Activated B cell treated with CpG ODN at 0.5 μM for 24 hours (primary cell): ENCODE measurements at regions of chr10 and their contacts with region 1.

Region 1: DNA sequence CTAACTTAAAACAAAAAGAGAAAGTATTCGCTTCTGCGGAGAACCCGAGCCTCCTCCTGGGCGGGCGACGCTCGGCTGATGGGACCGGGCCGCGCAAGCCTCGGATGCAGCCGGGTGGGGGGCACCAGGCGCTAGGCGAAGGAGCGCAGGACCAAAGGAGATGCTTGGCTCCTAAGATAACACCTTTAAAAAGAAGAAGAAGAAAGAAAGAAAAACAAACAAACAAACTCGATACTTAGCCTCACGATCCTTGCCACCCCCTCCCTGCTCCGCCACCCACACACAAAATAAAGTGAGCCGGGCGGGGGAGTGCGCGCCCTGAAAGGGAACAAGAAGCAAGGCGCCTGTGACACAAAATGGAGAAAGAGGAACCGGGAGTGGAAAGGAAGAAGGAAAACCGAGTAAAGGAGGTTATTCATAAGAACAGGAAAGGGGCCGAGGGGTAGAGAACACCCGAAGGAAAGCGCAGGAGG is 34.0 kb upstream of the EBLN1 start:
- DNase-seq: peak; percentile 61
- ATAC-seq: peak; percentile 45
- H3K4me3 Mint-ChIP-seq: peak overlapping the region; percentile 97
- H3K27ac Mint-ChIP-seq: peak overlapping the region; percentile 100
- H3K4me1 Mint-ChIP-seq: peaks cover 27% of the 10 kb centered on the region
- H3K27me3 Mint-ChIP-seq: no peaks in the 10 kb centered on the region
- CTCF ChIP-seq: no peak

Region 2: GRCh38 chr10:22003079-22003913 is 248.5 kb before region 1 on chr10 and contains the start of gene DNAJC1:
- CTCF ChIA-PET with region 1: no interaction called
- POLR2A ChIA-PET with region 1: interaction called, 11 read pairs
- intact Hi-C with region 1: loop called (anchors 1 kb)
- DNase-seq: peak; percentile 98
- ATAC-seq: peak; percentile 92
- H3K4me3 Mint-ChIP-seq: peak within 1 kb of the TSS; percentile 87
- H3K27ac Mint-ChIP-seq: peak within 1 kb of the TSS; percentile 91
- H3K4me1 Mint-ChIP-seq: peaks cover 41% of the 10 kb centered on the region
- H3K27me3 Mint-ChIP-seq: no peaks in the 10 kb centered on the region
- CTCF ChIP-seq: no peak
- total RNA-seq, gene DNAJC1: 9.2 and 10.9 TPM in 2 replicates

Region 3: GRCh38 chr10:22193945-22194344 is 57.8 kb before region 1 on chr10:
- CTCF ChIA-PET with region 1: no interaction called
- POLR2A ChIA-PET with region 1: no interaction called
- intact Hi-C with region 1: no loop called
- DNase-seq: no peak
- ATAC-seq: no peak
- H3K4me3 Mint-ChIP-seq: no peak overlapping the region
- H3K27ac Mint-ChIP-seq: no peak overlapping the region
- H3K4me1 Mint-ChIP-seq: no peaks in the 10 kb centered on the region
- H3K27me3 Mint-ChIP-seq: peaks cover 3% of the 10 kb centered on the region
- CTCF ChIP-seq: no peak

Region 4: GRCh38 chr10:22335173-22336123 is 83.7 kb after region 1 on chr10:
- CTCF ChIA-PET with region 1: interaction called, 3 read pairs
- POLR2A ChIA-PET with region 1: interaction called, 26 read pairs
- intact Hi-C with region 1: loop called (anchors 1 kb)
- DNase-seq: peak; percentile 66
- ATAC-seq: peak; percentile 76
- H3K4me3 Mint-ChIP-seq: peak overlapping the region; percentile 89
- H3K27ac Mint-ChIP-seq: peak overlapping the region; percentile 89
- H3K4me1 Mint-ChIP-seq: peaks cover 36% of the 10 kb centered on the region
- H3K27me3 Mint-ChIP-seq: peaks cover 17% of the 10 kb centered on the region
- CTCF ChIP-seq: no peak

Region 5: GRCh38 chr10:22475651-22476600 is 224.1 kb after region 1 on chr10:
- CTCF ChIA-PET with region 1: no interaction called
- POLR2A ChIA-PET with region 1: no interaction called
- intact Hi-C with region 1: loop called (anchors 5 kb)
- DNase-seq: peak; percentile 36
- ATAC-seq: peak; percentile 62
- H3K4me3 Mint-ChIP-seq: peak overlapping the region; percentile 87
- H3K27ac Mint-ChIP-seq: no peak overlapping the region
- H3K4me1 Mint-ChIP-seq: peaks cover 24% of the 10 kb centered on the region
- H3K27me3 Mint-ChIP-seq: peaks cover 47% of the 10 kb centered on the region
- CTCF ChIP-seq: no peak

Region 6: GRCh38 chr10:22714479-22715289 is 462.9 kb after region 1 on chr10 and contains the start of gene PIP4K2A:
- CTCF ChIA-PET with region 1: no interaction called
- POLR2A ChIA-PET with region 1: interaction called, 3 read pairs
- intact Hi-C with region 1: loop called (anchors 2 kb)
- DNase-seq: peak; percentile 83
- ATAC-seq: peak; percentile 85
- H3K4me3 Mint-ChIP-seq: peak within 1 kb of the TSS; percentile 90
- H3K27ac Mint-ChIP-seq: peak within 1 kb of the TSS; percentile 82
- H3K4me1 Mint-ChIP-seq: peaks cover 37% of the 10 kb centered on the region
- H3K27me3 Mint-ChIP-seq: no peaks in the 10 kb centered on the region
- CTCF ChIP-seq: no peak
- total RNA-seq, gene PIP4K2A: 94.6 and 102 TPM in 2 replicates

Region 7: GRCh38 chr10:23438550-23439441 is 1187.0 kb after region 1 on chr10 and contains the start of gene OTUD1:
- CTCF ChIA-PET with region 1: no interaction called
- POLR2A ChIA-PET with region 1: interaction called, 3 read pairs
- intact Hi-C with region 1: loop called (anchors 2 kb)
- DNase-seq: peak; percentile 99
- ATAC-seq: peak; percentile 80
- H3K4me3 Mint-ChIP-seq: peak within 1 kb of the TSS; percentile 85
- H3K27ac Mint-ChIP-seq: peak within 1 kb of the TSS; percentile 91
- H3K4me1 Mint-ChIP-seq: peaks cover 44% of the 10 kb centered on the region
- H3K27me3 Mint-ChIP-seq: no peaks in the 10 kb centered on the region
- CTCF ChIP-seq: no peak
- total RNA-seq, gene OTUD1: 18.7 and 21.0 TPM in 2 replicates